Activated CD4-positive, alpha-beta T cell treated with anti-CD3 and anti-CD28 coated beads, Interleukin-2, amount 10 ng/mL, durations not matched to agents 24 days and 14 days (primary cell): ENCODE measurements at regions of chr7 and their contacts with region 1.

Region 1: DNA sequence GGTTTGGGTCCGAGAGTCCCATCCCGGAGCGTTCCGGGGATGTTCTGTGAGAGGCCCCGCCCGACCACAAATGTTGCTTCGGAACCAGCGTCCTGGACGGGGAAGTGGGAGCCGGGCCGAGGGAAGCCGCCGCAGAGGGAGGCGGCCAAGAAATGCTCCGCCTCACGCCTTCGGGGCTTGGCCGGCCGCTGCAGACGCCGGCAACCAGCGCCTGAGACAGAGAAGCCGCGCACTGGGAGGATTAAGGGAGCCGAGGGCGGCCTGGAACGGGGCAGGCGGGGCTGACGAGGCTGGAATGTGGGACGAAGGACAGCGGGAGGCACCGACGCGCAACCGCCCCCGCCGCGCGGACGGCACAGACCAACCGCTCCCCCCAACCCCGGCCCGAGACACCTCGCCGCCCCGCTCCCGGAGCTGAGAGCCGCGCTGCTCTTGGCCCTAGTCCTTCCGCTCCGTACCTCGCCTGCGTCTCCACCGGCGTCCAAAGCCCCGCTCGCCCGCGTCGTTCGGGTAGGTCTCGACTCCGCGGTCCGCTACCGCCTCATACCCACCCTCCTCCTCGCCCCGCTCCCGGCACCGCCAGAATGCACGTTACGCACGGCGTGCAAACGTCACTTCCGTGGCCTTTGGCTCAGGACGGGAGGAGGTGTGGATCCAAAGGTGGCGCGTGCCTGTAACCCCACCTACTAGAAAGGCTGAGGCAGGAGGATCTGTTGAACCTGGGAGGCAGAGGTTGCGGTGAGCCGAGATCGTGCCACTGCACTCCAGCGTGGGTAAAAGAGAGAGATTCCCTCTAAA is 36.7 kb upstream of the KCTD7 start:
- DNase-seq: peak; percentile 97
- H3K4me3 Mint-ChIP-seq: peak overlapping the region; percentile 98
- H3K27ac Mint-ChIP-seq: peak overlapping the region; percentile 95
- H3K4me1 Mint-ChIP-seq: peaks cover 33% of the 10 kb centered on the region
- H3K27me3 Mint-ChIP-seq: no peaks in the 10 kb centered on the region

Region 2: GRCh38 chr7:66628361-66629140 is 36.6 kb after region 1 on chr7 and contains the start of gene KCTD7:
- intact Hi-C with region 1: loop called (anchors 1 kb)
- DNase-seq: peak; percentile 98
- H3K4me3 Mint-ChIP-seq: peak within 1 kb of the TSS; percentile 90
- H3K27ac Mint-ChIP-seq: peak within 1 kb of the TSS; percentile 84
- H3K4me1 Mint-ChIP-seq: peaks cover 44% of the 10 kb centered on the region
- H3K27me3 Mint-ChIP-seq: no peaks in the 10 kb centered on the region
- total RNA-seq, gene KCTD7: 8.9 and 9.2 TPM in 2 replicates

Region 3: DNA sequence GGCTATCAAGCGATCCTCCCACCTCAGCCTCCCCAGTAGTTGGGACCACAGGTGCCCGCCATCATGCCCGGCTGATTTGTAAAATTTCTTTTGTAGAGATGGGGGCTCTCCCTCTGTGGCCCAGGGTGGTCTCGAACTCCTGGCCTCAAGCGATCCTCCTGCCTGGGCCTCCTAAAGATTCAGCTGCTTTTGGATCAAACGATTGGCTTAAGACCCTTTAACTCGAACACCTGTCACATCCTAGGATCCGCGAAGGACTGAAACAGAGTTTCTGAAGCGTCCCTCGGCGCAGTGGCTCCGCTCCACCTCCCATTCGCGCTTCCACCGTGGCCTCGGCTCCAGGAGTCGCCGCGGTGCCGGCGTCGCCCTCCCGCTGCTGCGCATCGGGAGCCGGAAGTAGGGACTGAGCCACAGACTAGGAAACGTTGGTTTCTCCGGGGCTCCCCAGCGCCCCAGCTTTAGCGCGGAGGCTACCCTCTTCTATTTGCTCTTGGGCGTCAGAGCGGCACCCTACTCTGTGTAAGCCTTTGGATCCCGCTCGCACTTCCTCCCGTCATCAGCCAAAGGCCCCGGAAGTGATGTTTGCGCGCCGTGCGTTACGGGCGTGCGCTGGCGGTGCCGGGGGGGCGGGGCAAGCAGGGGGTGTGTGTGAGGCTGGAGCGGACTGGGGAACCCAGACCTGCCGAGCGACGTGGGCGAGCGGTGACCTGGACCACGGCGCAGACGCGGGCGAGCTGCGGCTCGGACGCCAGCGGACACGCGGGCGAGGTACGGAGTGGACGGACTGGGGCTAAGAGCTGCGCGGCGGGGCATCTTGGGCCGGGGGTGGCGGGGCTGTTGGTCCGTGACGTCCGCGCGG is 89.7 kb after region 1 on chr7:
- intact Hi-C with region 1: loop called (anchors 2 kb)
- DNase-seq: peak; percentile 99
- H3K4me3 Mint-ChIP-seq: peak overlapping the region; percentile 93
- H3K27ac Mint-ChIP-seq: peak overlapping the region; percentile 92
- H3K4me1 Mint-ChIP-seq: peaks cover 19% of the 10 kb centered on the region
- H3K27me3 Mint-ChIP-seq: no peaks in the 10 kb centered on the region

Region 4: DNA sequence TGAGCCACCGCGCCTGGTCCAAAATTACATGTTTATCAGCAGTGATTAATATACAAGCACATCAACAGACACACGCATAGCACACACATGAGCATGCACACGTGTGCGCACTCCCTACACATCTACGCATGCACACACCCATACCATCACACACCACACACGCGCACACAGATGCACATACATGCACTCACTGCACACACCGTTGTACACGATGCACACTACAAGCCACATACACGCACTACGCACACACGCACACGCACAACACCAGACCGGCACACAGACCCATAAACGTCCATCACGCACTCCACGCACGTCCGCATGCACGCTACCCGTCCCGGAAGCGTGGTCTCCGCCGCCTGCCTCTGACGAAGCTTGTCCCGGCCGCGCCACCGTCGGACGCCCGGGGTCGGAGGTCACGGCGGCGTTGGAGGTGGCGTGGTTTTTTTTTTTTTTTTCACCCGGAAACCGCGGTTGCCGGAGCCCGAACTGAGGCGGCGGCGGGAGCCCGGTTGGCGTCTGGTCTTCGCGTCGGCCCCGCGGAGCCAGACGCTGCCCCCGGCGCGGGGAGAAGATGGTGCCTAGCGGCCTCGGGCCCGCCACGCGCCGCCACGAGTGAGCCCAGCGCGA is 328.9 kb after region 1 on chr7 and contains the start of gene TMEM248:
- intact Hi-C with region 1: loop called (anchors 2 kb)
- DNase-seq: peak; percentile 98
- H3K4me3 Mint-ChIP-seq: peak within 1 kb of the TSS; percentile 97
- H3K27ac Mint-ChIP-seq: peak within 1 kb of the TSS; percentile 98
- H3K4me1 Mint-ChIP-seq: peaks cover 21% of the 10 kb centered on the region
- H3K27me3 Mint-ChIP-seq: no peaks in the 10 kb centered on the region
- total RNA-seq, gene TMEM248: 88.4 and 92.2 TPM in 2 replicates

Region 5: GRCh38 chr7:66964411-66964810 is 372.4 kb after region 1 on chr7:
- intact Hi-C with region 1: no loop called
- DNase-seq: no peak
- H3K4me3 Mint-ChIP-seq: no peak overlapping the region
- H3K27ac Mint-ChIP-seq: no peak overlapping the region
- H3K4me1 Mint-ChIP-seq: no peaks in the 10 kb centered on the region
- H3K27me3 Mint-ChIP-seq: no peaks in the 10 kb centered on the region